A549 (cell line): ENCODE measurements at regions of chr1 and their contacts with region 1.

Region 1: DNA sequence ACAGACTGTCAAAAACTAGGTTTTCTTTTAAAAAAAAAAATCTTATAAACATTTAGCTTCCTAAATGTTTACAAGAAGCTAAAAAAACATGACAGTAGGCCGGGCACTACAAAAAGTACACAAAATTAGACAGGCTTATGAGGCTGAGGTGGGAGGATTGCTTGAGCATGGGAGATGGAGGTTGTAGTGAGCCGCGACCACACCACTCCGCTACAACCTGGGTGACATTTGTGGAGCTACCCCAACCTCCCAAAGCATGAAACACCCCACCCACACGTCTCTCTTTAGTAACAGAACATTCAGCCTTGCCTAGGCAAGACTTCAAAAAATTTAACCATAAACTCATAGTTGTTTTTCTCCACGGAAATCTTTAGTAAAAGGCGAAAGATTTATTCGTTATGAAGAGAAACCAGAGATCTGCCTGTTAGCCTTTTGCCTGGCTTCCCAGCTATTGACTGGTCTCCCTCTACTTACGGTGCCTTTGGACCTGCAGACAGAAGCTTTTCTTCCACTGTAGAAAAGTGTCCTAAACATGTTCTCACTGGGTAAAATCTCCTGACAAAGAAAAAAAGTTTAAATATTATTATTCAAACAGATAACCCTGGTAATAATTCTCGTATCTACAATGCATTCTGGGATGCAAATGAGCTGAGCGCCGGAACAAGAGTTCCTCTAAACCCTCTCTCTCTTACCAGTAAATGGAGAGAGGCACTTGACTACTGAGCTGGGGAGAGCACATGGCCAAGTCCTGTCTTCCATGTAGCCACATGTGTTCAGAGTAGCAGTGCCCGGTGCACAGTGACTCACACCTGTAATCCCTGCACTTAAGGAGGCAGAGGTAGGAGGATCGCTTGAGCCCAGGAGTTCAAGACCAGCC is 9.2 kb downstream of the RNU5D-1 start:
- DNase-seq: peak; percentile 93 to 95
- ATAC-seq: peak; percentile 96 to 98
- H3K4me3 ChIP-seq: no peak overlapping the region
- H3K27ac ChIP-seq: peak overlapping the region; percentile 84 to 90
- H3K4me1 ChIP-seq: peaks cover 8% of the 10 kb centered on the region; the same call in 1 of the 3 replicates
- CTCF ChIP-seq: no peak
- EP300 ChIP-seq: 0 out of 5 replicates have a peak, but pooled peaks of 1 of the 2 experiments have one; percentile 20
- POLR2A ChIP-seq: peak; percentile 100
- RAD21 ChIP-seq: no peak

Region 2: GRCh38 chr1:43634721-43635120 is 1087.0 kb before region 1 on chr1:
- CTCF ChIA-PET with region 1: no interaction called
- POLR2A ChIA-PET with region 1: no interaction called
- DNase-seq: peak in 1 of 2 experiments; percentile 37
- ATAC-seq: peak; percentile 64 to 72; a peak in 5 of 6 replicates
- H3K4me3 ChIP-seq: no peak overlapping the region
- H3K27ac ChIP-seq: no peak overlapping the region
- H3K4me1 ChIP-seq: peaks cover 9% of the 10 kb centered on the region; the same call in 2 of the 3 replicates
- CTCF ChIP-seq: no peak
- EP300 ChIP-seq: no peak
- POLR2A ChIP-seq: no peak
- RAD21 ChIP-seq: no peak

Region 3: GRCh38 chr1:44674113-44675000 is 47.4 kb before region 1 on chr1 and contains the starts of genes ARMH1 and TMEM53:
- CTCF ChIA-PET with region 1: interaction called, 3 read pairs
- POLR2A ChIA-PET with region 1: interaction called, 28 read pairs
- DNase-seq: peak; percentile 96 to 98
- ATAC-seq: peak; percentile 96 to 97
- H3K4me3 ChIP-seq: peak within 1 kb of the TSS; percentile 57
- H3K27ac ChIP-seq: peak within 1 kb of the TSS; percentile 90 to 95
- H3K4me1 ChIP-seq: peaks cover 25% of the 10 kb centered on the region
- CTCF ChIP-seq: no peak
- EP300 ChIP-seq: no peak
- POLR2A ChIP-seq: peak; percentile 54
- RAD21 ChIP-seq: no peak
- polyA plus RNA-seq, gene ARMH1: 2.7 TPM in 2 replicates
- polyA plus RNA-seq, gene TMEM53: 6.2 and 8.9 TPM in 2 replicates

Region 4: GRCh38 chr1:44707959-44708831 is 13.5 kb before region 1 on chr1:
- CTCF ChIA-PET with region 1: interaction called, 8 read pairs
- POLR2A ChIA-PET with region 1: interaction called, 27 read pairs
- DNase-seq: peak; percentile 40 to 63
- ATAC-seq: peak; percentile 67 to 76; a peak in 5 of 6 replicates
- H3K4me3 ChIP-seq: no peak overlapping the region
- H3K27ac ChIP-seq: peak overlapping the region; percentile 84 to 93
- H3K4me1 ChIP-seq: peaks cover 31% of the 10 kb centered on the region
- CTCF ChIP-seq: peak; percentile 49; the same call in 2 of the 3 replicates
- EP300 ChIP-seq: no peak
- POLR2A ChIP-seq: no peak
- RAD21 ChIP-seq: peak; percentile 43